Right cardiac atrium (tissue), 5 donors: ENCODE measurements at regions of chr7 and their contacts with region 1.

Region 1: GRCh38 chr7:143214789-143215679 is 6.8 kb upstream of the TAS2R40 start:
- DNase-seq: peak in 2 of 3 donors; percentile 14 to 36
- ATAC-seq: peak; percentile 68 to 70
- H3K4me3 ChIP-seq: no peak overlapping the region
- H3K27ac ChIP-seq: no peak overlapping the region
- H3K4me1 ChIP-seq: no peaks in the 10 kb centered on the region
- H3K27me3 ChIP-seq: no peaks in the 10 kb centered on the region

Region 2: DNA sequence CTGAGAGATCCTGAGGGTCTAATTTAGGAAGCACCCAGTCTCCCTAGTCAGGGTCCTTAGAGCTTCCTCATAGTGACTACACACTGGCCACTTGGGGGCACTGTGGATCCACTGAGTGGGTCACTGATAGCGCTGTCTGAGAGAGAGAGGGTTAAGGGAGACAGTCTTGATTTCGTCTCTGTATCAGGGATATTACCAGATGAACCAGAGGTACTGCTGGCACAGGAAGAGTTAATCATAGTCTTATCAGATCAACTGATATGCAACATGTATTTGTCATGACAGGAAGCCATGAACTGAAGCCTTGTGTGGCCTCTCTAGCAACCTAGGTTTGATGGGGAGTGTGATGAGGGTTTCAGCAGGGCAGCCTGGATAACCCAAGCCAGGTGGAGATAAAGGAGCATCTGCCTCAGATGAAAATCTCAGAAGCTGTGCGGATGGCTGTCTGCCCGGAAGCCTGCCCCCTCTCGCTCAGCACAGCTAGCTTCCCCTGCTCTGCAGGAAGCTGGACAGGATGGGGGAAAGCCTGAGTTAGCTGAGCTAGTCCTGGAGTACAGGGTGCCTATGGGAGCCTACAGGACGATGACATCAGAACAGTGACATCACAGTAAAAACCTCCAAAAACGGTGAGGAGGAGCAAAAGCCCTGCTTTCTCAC is 679.8 kb before region 1 on chr7:
- intact Hi-C with region 1: no loop called
- DNase-seq: peak; percentile 40 to 60 (median 57)
- ATAC-seq: peak; percentile 51 to 61
- H3K4me3 ChIP-seq: no peak overlapping the region
- H3K27ac ChIP-seq: no peak overlapping the region
- H3K4me1 ChIP-seq: no peaks in the 10 kb centered on the region
- H3K27me3 ChIP-seq: no peaks in the 10 kb centered on the region

Region 3: DNA sequence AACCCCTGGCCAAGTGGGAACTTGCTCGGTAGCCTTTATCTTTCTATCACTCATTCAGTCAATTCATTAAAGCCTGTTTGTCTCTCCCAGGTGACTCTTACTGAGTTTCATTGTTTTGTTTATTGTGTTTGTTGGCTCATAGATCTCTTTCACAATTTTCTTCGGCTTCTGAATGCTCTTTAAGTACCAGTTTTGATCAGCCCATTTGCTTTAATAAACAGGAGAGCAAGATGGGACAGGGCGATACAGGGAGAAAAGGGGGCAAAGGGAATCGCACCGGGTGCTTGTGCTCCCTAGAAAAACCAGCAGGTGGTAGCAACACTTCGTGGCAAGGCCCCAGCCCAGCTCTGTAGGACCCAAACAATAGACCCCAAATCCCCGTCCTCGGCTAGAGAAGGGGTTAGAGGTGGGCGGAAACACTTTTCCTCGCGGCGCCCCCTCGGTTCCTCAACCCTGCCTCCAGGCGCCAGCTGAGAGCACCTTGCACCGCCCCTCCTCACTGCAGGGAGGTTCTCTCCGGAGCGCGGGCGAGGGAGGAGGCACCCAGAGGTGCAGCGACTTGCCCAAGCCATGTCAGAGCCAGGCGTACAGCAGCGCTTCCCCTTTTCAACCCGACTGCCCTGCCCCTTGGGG is 361.2 kb before region 1 on chr7:
- intact Hi-C with region 1: loop called in 2 of 4 experiments (anchors 5 to 10 kb)
- DNase-seq: peak; percentile 62 to 82 (median 81)
- ATAC-seq: peak; percentile 74 to 81
- H3K4me3 ChIP-seq: peak overlapping the region; percentile 88
- H3K27ac ChIP-seq: peak overlapping the region; percentile 13
- H3K4me1 ChIP-seq: no peaks in the 10 kb centered on the region
- H3K27me3 ChIP-seq: no peaks in the 10 kb centered on the region

Region 4: GRCh38 chr7:142873281-142873787 is 341.7 kb before region 1 on chr7:
- intact Hi-C with region 1: loop called in 1 of 4 experiments (anchors 10 kb)
- DNase-seq: no peak
- ATAC-seq: no peak
- H3K4me3 ChIP-seq: no peak overlapping the region
- H3K27ac ChIP-seq: no peak overlapping the region
- H3K4me1 ChIP-seq: no peaks in the 10 kb centered on the region
- H3K27me3 ChIP-seq: no peaks in the 10 kb centered on the region

Region 5: GRCh38 chr7:143008007-143008901 is 206.8 kb before region 1 on chr7:
- intact Hi-C with region 1: loop called (anchors 1 to 5 kb)
- DNase-seq: peak; percentile 71 to 92 (median 89)
- ATAC-seq: peak; percentile 89 to 93
- H3K4me3 ChIP-seq: no peak overlapping the region
- H3K27ac ChIP-seq: no peak overlapping the region
- H3K4me1 ChIP-seq: no peaks in the 10 kb centered on the region
- H3K27me3 ChIP-seq: no peaks in the 10 kb centered on the region

Region 6: DNA sequence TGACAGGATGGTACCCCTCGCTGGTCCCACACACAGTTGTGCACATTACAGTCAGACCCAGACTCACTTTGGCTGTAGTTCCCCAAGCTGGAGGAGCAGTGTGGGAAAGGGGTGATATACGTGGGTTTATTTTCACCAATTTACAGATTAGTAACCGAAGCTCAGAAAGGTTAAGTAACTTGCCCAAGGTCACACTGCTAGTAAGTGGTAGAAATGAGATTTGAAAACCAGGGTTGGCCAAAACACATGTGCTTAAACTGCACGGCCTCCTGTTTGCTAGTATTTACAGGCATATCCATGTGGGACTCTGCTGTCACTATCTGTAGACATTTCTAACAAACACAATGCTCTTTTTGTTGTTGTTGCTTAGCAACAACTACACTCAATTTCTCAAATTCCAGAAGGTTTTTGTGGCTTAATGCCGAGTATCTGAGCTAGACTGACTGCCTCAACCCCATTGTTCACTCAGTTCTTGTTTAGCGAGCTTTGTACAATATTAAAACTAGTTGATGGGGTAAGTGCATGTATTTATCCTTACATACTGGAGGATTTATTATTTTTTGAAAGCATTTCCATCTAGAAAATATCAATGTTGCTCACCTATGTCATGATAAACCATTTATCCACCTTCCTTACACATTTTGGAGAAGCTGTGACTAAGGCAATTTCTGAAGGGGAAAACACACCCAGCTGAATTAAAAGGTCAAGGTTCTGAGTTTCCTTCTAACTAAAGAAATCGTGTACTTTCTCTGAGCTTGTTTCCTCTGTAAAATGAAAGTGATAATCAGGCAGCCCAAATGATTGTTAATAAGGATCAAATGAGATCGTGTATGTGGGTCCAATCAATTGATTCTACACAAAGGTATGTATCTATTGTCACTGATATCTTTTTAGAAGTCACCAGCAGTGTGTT is 64.4 kb after region 1 on chr7:
- intact Hi-C with region 1: no loop called
- DNase-seq: no peak
- ATAC-seq: peak; percentile 86 to 87
- H3K4me3 ChIP-seq: peak overlapping the region; percentile 32
- H3K27ac ChIP-seq: peak overlapping the region; percentile 77
- H3K4me1 ChIP-seq: no peaks in the 10 kb centered on the region
- H3K27me3 ChIP-seq: no peaks in the 10 kb centered on the region

Region 7: DNA sequence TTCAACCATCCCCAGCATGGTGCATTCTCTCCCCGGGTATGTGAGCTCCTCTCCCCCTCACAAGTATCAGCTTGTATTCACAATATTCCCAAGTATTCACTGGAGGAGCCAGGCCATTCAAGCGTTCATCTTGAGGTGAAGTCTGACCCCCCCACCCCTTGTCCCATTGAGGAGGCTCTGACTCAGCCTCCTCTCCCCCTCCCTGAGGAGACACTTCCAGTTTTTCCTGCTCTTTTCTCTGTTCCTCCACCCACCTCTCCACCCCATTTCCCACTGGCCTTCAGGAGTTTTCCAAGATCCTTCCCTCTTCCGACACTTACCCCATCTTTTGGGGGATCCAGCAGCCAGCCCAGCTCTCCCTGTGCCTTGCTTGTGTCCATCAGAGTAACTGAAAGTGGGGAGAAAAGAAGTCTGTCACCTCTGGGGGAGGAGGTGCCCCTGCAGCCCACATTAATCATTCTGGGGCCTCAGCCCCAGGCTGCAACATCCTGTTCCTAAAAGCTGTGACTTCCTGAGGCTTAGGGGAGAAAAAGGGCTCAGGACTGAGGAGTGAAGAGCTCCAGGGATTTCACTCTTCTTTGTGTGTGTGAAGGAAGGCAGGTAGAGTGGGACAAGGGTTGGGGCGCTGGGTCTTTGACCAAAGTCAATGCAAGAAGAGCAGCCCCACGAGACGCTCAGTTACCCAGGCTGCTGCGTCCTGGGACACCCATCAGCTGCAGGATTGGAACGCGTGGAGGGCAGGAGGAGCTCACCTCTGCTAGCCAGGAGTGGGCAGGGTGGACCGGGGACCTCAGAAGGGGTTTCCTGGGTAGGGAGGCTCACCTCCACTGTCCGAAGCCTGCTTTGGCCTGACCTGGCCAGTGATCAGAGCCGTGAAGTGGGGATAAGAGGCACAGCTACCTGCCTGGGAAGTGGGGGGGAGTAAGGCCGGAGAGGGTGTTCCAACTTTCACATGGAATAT is 192.5 kb after region 1 on chr7:
- intact Hi-C with region 1: no loop called
- DNase-seq: peak in 1 of 3 donors; percentile 51
- ATAC-seq: peak in 1 of 2 donors; percentile 5
- H3K4me3 ChIP-seq: no peak overlapping the region
- H3K27ac ChIP-seq: no peak overlapping the region
- H3K4me1 ChIP-seq: peaks cover 2% of the 10 kb centered on the region
- H3K27me3 ChIP-seq: no peaks in the 10 kb centered on the region